Right ventricle myocardium inferior (tissue), 1 donor: ENCODE measurements at regions of chr16 and their contacts with region 1.

Region 1: DNA sequence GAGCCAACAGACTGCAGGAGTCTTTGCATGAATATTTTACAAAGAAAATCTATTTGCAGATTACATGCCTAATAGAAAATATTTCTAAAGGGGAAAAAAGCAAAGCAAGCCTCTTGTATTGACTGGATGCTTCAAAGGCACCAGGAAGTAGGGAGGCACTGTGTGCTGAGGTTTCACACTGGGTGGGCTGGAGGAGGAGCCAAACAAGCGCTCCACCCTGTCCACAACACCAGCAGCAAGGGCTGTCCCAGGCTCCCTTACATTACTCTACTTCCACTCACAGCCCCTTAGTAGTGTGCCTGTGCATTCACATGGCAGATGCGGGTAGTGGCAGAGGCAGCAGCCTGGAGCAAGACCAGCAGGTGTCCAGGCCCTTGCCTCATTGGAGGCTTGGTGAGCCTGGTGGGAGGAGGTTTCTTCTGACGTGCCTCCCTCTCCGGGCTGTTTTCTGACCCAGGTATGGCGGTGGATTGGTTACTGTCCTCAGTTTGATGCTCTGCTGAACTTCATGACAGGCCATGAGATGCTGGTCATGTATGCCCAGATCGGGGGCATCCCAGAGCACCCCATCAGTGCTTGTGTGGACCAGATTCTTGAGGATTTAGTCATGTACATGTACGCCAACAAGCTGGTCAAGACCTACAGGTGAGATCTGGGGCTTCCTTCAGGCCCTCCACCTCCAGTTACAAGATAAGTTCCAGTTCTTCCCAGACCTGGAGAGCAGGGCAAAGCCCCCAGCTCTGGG is 7.0 kb upstream of the CCNF start:
- DNase-seq: no peak
- ATAC-seq: no peak

Region 2: GRCh38 chr16:2253293-2253692 is 169.0 kb before region 1 on chr16:
- intact Hi-C with region 1: no loop called
- DNase-seq: peak; percentile 44
- ATAC-seq: no peak

Region 3: GRCh38 chr16:2340564-2341455 is 81.5 kb before region 1 on chr16 and contains the start of gene ABCA3:
- intact Hi-C with region 1: loop called (anchors 2 kb)
- DNase-seq: peak; percentile 95
- ATAC-seq: peak; percentile 98
- total RNA-seq, gene ABCA3: 7.4 TPM

Region 4: GRCh38 chr16:2388875-2389433 is 33.3 kb before region 1 on chr16:
- intact Hi-C with region 1: no loop called
- DNase-seq: no peak
- ATAC-seq: no peak

Region 5: DNA sequence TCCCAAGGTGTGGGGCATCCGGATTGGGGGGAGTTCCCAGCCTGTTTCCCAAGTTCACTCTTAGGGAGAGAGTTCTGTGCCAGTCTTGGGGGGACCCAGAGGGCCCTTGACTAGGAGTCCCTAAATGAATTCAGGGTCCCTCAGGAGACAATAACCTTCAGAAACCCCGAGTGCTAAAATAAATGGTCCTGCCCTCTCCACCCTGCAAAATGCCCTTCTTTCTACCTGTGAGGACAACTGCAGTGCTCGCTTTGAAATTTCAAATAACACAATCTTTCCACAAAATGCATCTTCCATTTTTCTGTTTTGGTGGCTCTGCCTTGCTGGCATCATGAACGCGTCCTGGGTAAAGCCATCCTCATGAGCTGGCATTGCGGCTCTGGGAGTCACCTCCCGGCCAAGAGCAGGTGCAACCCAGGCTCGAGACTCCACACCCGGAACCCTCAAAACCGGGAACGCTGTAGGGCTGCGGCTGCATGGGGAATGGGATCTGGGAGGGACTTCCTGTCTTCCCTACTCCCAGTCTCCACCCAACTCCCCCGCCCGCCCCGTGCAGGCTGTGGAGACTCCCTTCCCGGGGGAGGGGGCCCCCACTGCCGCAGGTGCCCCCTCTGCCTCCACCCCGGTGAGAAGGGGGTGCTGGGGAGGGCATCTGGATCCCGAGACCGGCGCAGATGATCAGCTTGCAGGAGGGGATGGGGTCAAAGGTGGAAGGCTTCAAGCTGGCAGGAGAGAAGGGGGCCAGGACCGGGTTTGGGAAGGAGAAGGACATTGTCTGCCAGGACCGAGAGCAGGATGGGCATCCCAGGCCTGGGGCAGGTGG is 690.0 kb after region 1 on chr16 and contains the start of gene ZNF205:
- intact Hi-C with region 1: no loop called
- DNase-seq: peak; percentile 82
- ATAC-seq: peak; percentile 95
- total RNA-seq, gene ZNF205: 7.4 TPM